ENCODE measurements at regions of chr5 and their contacts with region 1.

Region 1: GRCh38 chr5:154072414-154073171 is 33.8 kb downstream of the MFAP3 start:
- DNase-seq: peak; percentile 64 to 84
- ATAC-seq: peak; percentile 98 to 99
- H3K4me3 ChIP-seq: no peak overlapping the region
- H3K27ac ChIP-seq: peak overlapping the region in 1 of 2 experiments; percentile 57; a peak in 3 of 6 replicates
- H3K4me1 ChIP-seq: no peaks in the 10 kb centered on the region
- CTCF ChIP-seq: peak; percentile 97
- EP300 ChIP-seq: no peak
- POLR2A ChIP-seq: no peak
- RAD21 ChIP-seq: peak; percentile 98 to 99

Region 2: GRCh38 chr5:154038707-154039457 is 33.7 kb before region 1 on chr5 and contains the starts of genes FAM114A2 and MFAP3:
- CTCF ChIA-PET with region 1: interaction called, 10 read pairs
- POLR2A ChIA-PET with region 1: interaction called, 4 read pairs
- DNase-seq: peak; percentile 91 to 95
- ATAC-seq: peak; percentile 100
- H3K4me3 ChIP-seq: peak within 1 kb of the TSS; percentile 63
- H3K27ac ChIP-seq: peak within 1 kb of the TSS; percentile 82 to 87
- H3K4me1 ChIP-seq: peaks cover 12% of the 10 kb centered on the region
- CTCF ChIP-seq: no peak
- EP300 ChIP-seq: 0 out of 5 replicates have a peak, but pooled peaks of 1 of the 2 experiments have one; percentile 17
- POLR2A ChIP-seq: peak; percentile 92
- RAD21 ChIP-seq: no peak
- polyA plus RNA-seq, gene FAM114A2: 19.0 and 21.3 TPM in 2 replicates
- polyA plus RNA-seq, gene MFAP3: 38.9 and 46.9 TPM in 2 replicates

Region 3: DNA sequence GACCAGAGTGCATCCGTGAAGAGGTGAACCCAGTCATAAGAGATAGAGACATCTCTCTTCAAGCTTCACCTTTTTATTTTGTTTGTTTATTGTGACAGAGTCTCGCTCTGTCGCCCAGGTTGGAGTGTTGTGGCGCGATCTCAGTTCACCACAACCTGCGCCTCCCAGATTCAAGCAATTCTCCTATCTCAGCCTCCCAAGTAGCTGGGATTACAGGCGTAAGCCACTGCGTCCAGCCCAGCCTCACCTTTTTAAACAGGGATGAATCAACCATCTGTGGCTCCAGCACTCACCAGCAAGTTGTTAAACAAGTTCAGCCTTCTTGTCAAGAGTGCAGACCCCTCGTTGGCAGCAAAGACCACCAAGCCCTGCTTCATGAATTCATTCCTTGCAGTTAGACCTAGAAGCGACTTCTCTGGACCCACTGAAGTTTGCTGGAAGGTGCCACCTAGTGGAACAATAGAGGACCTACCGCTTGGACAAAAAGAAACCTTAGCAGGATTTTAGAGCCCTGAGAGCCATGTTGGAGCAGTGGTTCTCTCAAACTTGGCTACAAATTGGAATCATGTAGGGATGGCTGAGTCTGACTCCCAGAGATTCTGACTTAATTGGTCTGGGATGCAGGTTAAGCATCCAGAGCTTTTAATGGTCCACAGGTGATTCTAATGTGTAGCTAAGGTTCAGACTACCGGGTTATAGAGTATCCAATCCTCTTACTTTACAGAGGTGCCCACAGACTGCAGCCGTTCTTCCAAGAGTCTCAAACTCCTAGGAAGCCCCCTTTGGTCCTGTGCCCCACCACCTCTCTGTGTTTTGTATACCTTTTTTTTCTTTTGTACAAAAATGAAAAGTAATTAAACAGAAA is 107.5 kb after region 1 on chr5:
- CTCF ChIA-PET with region 1: interaction called, 57 read pairs
- POLR2A ChIA-PET with region 1: no interaction called
- DNase-seq: peak; percentile 69 to 80
- ATAC-seq: peak; percentile 96 to 98
- H3K4me3 ChIP-seq: no peak overlapping the region
- H3K27ac ChIP-seq: no peak overlapping the region
- H3K4me1 ChIP-seq: no peaks in the 10 kb centered on the region
- CTCF ChIP-seq: peak; percentile 76
- EP300 ChIP-seq: no peak
- POLR2A ChIP-seq: no peak
- RAD21 ChIP-seq: peak; percentile 77 to 82

Region 4: DNA sequence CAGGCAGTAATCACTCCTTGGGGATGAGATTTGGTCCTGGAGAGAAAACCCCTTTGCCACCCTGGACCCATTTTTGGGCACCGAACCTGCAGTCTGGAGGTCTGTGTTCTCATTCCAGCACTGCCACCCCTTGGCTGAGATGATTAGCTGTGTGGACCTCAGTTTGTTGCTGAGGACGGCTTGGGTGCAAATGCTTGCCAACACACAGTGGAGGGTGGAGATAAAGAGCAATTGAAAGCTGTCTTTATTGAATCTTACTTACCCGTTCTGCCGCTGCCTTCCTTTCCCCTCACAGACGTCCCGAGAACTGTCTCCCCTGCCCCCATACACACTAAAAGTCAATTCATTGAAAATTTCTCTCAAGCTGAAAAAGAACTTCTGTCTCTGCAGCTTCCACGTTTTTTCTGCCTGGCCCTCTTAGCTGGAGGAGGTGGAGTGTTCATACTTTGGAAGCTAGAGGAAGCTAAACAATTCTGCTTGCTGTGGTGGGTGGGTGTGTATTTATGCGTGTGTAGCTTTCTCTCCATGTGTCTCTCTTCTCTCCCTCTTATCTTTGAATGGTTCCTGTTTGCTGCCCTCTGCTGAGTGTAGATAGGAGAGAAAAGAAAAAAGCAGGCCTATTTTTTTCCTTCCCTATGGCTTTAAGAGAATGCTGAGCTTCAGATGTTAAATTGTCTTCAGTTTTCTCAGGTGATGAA is 124.5 kb after region 1 on chr5:
- CTCF ChIA-PET with region 1: interaction called, 24 read pairs
- POLR2A ChIA-PET with region 1: interaction called, 3 read pairs
- DNase-seq: peak; percentile 35 to 51
- ATAC-seq: peak; percentile 37 to 38; a peak in 3 of 6 replicates
- H3K4me3 ChIP-seq: no peak overlapping the region
- H3K27ac ChIP-seq: peak overlapping the region; percentile 90 to 93
- H3K4me1 ChIP-seq: peaks cover 89% of the 10 kb centered on the region
- CTCF ChIP-seq: peak; percentile 48
- EP300 ChIP-seq: no peak
- POLR2A ChIP-seq: no peak
- RAD21 ChIP-seq: peak; percentile 16 to 42; a peak in 3 of 5 replicates

Region 5: DNA sequence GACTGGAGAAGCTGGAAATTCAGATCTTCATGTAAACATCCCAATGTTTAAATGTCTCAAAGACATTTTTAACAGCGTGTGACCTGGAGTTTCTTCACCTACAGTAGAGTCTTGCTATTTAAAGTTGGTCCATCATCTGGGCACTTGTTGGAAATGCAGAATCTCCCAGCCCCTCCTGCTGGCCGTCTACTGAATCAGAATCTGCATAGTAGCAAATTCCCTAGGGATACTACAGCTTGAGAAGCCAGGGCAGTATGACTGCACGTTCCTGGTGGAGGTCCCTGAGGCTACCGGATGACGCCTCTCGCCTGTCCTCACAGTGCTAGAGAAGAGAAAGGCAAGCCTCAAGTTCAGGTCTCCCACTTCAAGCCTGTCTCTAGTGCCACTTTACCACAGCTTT is 388.9 kb after region 1 on chr5:
- CTCF ChIA-PET with region 1: interaction called, 17 read pairs
- POLR2A ChIA-PET with region 1: no interaction called
- DNase-seq: peak in 1 of 2 experiments; percentile 40
- ATAC-seq: peak; percentile 82 to 86
- H3K4me3 ChIP-seq: no peak overlapping the region
- H3K27ac ChIP-seq: no peak overlapping the region
- H3K4me1 ChIP-seq: peaks cover 19% of the 10 kb centered on the region
- CTCF ChIP-seq: peak; percentile 24; the same call in 2 of the 3 replicates
- EP300 ChIP-seq: no peak
- POLR2A ChIP-seq: no peak
- RAD21 ChIP-seq: peak; percentile 21 to 45; a peak in 2 of 5 replicates

Region 6: GRCh38 chr5:154610321-154611154 is 537.9 kb after region 1 on chr5:
- CTCF ChIA-PET with region 1: interaction called, 11 read pairs
- POLR2A ChIA-PET with region 1: no interaction called
- DNase-seq: peak; percentile 84 to 88
- ATAC-seq: peak; percentile 93 to 98
- H3K4me3 ChIP-seq: peak overlapping the region; percentile 33
- H3K27ac ChIP-seq: peak overlapping the region in 1 of 2 experiments; percentile 69; a peak in 3 of 6 replicates
- H3K4me1 ChIP-seq: peaks cover 4% of the 10 kb centered on the region; the same call in 1 of the 3 replicates
- CTCF ChIP-seq: peak; percentile 94
- EP300 ChIP-seq: no peak
- POLR2A ChIP-seq: no peak
- RAD21 ChIP-seq: peak; percentile 99